Testis (tissue), 5 donors: ENCODE measurements at regions of chr20 and their contacts with region 1.

Region 1: DNA sequence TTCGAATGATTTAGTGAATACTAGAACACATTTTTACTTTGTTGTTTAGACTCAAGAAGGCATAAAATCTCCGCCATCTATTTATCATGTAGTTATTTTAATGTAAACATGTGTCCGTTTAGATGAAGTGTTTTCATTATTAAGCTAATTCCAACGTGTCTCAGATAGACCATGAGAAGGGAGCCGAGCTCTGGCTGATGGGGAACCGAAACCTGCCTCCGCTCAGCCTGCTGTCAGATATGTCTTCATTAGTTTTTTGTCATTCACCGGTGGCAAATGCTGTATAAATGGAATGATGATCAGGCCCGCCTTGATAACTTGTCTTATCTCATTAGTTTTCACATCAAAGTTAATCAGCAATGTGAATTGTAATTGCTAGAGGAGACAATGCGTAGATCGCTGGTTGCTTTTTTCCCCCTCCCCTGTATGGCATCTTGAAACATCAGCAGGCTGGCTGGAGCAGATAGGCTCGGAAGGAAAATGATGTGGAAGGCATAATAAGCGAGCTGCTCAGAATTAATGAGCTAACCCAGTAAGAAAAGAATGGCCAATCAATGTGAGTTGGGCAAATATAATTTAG is 136.4 kb downstream of the LINC00237 start:
- DNase-seq: no peak
- H3K4me3 ChIP-seq: no peak overlapping the region
- H3K27ac ChIP-seq: no peak overlapping the region
- H3K4me1 ChIP-seq: no peaks in the 10 kb centered on the region
- H3K27me3 ChIP-seq: no peaks in the 10 kb centered on the region
- CTCF ChIP-seq: no peak
- POLR2A ChIP-seq: no peak

Region 2: GRCh38 chr20:20780127-20780824 is 189.5 kb before region 1 on chr20:
- intact Hi-C with region 1: no loop called
- DNase-seq: peak; percentile 23
- H3K4me3 ChIP-seq: no peak overlapping the region
- H3K27ac ChIP-seq: no peak overlapping the region
- H3K4me1 ChIP-seq: peaks cover 3% of the 10 kb centered on the region
- H3K27me3 ChIP-seq: no peaks in the 10 kb centered on the region
- CTCF ChIP-seq: no peak
- POLR2A ChIP-seq: no peak

Region 3: DNA sequence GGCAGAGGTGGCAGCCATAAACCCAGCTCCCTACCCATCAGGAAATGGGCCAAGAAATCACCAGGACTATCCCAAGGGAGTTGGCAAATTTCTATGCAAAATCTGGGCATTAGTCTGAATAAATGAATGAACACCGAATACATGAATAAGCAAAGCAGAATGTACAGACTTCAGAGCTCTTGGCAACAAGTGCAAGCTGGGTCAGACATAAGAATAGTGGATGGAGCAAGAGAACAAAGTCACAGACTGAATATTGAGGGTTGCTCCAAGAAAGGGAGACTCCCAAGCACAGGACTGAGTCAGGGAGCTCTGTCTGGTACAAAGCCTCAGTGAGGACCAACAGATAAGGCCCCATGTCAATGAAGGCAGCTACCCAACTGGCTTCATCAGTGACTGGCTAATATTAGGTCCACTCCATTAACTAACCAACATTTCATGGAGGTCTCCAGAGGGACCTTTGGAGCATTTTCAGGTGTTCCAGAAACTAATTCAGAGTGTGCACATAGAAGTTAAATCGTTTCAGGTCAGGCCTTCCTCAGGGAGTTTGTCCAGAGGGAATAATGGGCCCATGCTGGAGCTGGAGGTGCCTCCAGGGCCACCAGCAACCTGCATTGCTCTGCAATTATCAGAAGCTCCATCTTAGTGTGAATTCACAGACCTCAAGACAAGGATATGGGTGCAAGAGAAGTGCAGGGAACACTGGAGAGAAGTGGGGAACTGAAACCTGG is 65.9 kb before region 1 on chr20:
- intact Hi-C with region 1: loop called (anchors 10 kb)
- DNase-seq: no peak
- H3K4me3 ChIP-seq: no peak overlapping the region
- H3K27ac ChIP-seq: no peak overlapping the region
- H3K4me1 ChIP-seq: no peaks in the 10 kb centered on the region
- H3K27me3 ChIP-seq: no peaks in the 10 kb centered on the region
- CTCF ChIP-seq: no peak
- POLR2A ChIP-seq: no peak

Region 4: DNA sequence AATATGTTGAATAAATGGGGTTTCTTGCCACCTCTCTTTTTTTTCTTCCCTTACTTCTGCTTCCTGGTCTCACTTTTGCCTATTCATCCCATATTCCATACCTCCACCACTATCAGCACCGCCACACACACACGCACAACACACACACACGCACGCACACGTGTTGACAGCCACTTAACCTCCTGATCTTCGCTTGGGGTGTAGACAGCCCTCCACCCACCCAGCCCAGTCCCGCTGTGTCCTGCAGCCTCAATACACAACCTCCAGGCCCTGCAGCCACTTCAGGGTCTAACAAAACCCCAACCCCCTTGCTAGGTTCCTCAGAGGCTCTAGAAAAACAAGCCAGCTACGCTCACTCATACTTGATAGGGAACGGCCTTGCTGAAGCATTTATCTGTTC is 64.0 kb after region 1 on chr20:
- intact Hi-C with region 1: no loop called
- DNase-seq: no peak
- H3K4me3 ChIP-seq: no peak overlapping the region
- H3K27ac ChIP-seq: no peak overlapping the region
- H3K4me1 ChIP-seq: no peaks in the 10 kb centered on the region
- H3K27me3 ChIP-seq: no peaks in the 10 kb centered on the region
- CTCF ChIP-seq: no peak
- POLR2A ChIP-seq: no peak